ENCODE measurements at regions of chr6 and their contacts with region 1.

Region 1: DNA sequence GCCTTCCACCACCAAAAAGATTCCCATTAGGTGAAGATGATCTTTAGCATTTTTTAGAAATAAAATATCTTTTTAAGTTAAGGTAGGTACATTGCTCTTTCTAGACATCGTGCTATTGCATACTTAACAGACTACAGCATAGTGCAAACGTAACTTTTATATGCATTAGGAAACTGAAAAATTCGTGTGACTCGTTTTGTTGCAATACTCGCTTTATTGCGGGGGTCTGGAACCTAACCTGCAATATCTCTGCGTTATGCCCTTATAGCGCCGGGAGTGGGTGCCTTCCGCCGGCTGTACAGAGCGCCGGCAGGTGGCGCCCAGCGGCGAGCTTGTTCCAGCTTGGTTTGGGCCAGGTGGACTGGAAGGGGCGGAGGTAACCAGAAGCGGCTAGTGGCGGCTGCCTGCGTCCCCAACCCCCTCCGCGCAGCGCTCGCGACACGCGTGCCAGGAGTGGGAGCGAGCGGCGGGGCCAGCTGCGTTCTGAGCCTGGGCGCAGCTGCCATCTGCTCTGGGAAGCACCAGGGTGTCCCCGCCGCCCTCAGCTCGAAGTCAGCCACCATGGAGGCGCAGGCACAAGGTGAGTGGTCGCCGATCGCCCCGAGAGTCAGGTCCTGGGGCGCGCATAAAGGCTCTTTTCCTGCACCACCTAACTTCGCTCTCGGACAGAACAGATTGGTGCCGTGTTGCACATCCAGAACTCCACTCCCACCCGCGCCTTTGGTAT is at the start of gene TPD52L1:
- DNase-seq: peak; percentile 91 to 93
- H3K4me3 ChIP-seq: peak within 1 kb of the TSS; percentile 46 to 66 (median 63)
- H3K27ac ChIP-seq: peak within 1 kb of the TSS; percentile 50 to 75 (median 70)
- H3K4me1 ChIP-seq: peaks cover 13 to 14% of the 10 kb centered on the region in 2 donors
- H3K27me3 ChIP-seq: no peaks in the 10 kb centered on the region
- CTCF ChIP-seq: peak; percentile 69 to 94 (median 82)
- POLR2A ChIP-seq: peak; percentile 43 to 87
- total RNA-seq, gene TPD52L1: 182 to 392 (median 293) TPM

Region 2: GRCh38 chr6:125301435-125302391 is 148.2 kb after region 1 on chr6 and contains the start of gene HDDC2:
- intact Hi-C with region 1: loop called (anchors 5 kb)
- DNase-seq: peak; percentile 67 to 71
- H3K4me3 ChIP-seq: peak within 1 kb of the TSS; percentile 52 to 77 (median 71)
- H3K27ac ChIP-seq: peak within 1 kb of the TSS; percentile 66 to 90 (median 70)
- H3K4me1 ChIP-seq: peaks cover 8 to 14% of the 10 kb centered on the region in 2 donors
- H3K27me3 ChIP-seq: no peaks in the 10 kb centered on the region
- CTCF ChIP-seq: no peak
- POLR2A ChIP-seq: peak in 1 of 2 donors; percentile 73
- total RNA-seq, gene HDDC2: 58.9 to 89.5 (median 78.9) TPM

Region 3: DNA sequence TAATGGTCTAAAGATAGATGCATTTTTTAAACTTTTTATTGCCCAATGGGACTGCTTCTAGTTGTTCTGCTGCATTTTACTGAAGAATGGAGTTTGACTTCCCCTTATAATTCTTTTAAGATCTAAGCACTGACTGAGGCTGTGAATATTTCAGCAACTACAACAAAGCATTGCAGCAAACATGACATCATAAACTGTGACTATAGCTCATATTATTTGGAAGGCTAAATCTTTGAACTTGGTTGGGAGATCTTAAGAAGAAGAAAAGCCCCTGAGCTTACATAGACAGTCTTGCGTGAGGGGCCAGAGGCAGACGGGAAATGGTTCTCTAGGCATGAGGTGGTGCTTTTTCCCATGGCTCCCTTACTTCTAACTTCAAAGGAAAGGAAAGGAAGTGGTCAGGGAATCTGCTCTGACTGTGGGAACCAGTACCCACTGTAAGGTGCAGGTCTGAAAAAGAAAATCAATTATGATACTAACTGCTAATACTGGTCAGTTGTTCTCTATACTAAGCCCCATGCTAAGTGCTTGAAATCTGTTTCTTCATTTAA is 610.6 kb after region 1 on chr6:
- intact Hi-C with region 1: loop called (anchors 10 kb)
- DNase-seq: no peak
- H3K4me3 ChIP-seq: no peak overlapping the region
- H3K27ac ChIP-seq: no peak overlapping the region
- H3K4me1 ChIP-seq: peaks cover 4 to 13% of the 10 kb centered on the region in 2 donors
- H3K27me3 ChIP-seq: no peaks in the 10 kb centered on the region
- CTCF ChIP-seq: no peak
- POLR2A ChIP-seq: no peak

Measured in thyroid gland (tissue), 4 donors.